CD4-positive, alpha-beta memory T cell (primary cell): ENCODE measurements at regions of chr6 and their contacts with region 1.

Region 1: GRCh38 chr6:132530293-132530974 is 7.6 kb upstream of the TAAR9 start:
- DNase-seq: peak; percentile 54 to 66 (median 59)
- H3K4me3 ChIP-seq: no peak overlapping the region
- H3K4me3 Mint-ChIP-seq: peak overlapping the region in 3 of 8 donors; percentile 18 to 57 (median 42)
- H3K27ac ChIP-seq: no peak overlapping the region
- H3K27ac Mint-ChIP-seq: no peak overlapping the region
- H3K4me1 ChIP-seq: no peaks in the 10 kb centered on the region
- H3K4me1 Mint-ChIP-seq: peaks cover 0 to 2% (median 0%) of the 10 kb centered on the region in 4 donors
- H3K27me3 ChIP-seq: peaks cover 6% of the 10 kb centered on the region
- H3K27me3 Mint-ChIP-seq: peaks cover 14 to 20% of the 10 kb centered on the region in 2 donors

Region 2: DNA sequence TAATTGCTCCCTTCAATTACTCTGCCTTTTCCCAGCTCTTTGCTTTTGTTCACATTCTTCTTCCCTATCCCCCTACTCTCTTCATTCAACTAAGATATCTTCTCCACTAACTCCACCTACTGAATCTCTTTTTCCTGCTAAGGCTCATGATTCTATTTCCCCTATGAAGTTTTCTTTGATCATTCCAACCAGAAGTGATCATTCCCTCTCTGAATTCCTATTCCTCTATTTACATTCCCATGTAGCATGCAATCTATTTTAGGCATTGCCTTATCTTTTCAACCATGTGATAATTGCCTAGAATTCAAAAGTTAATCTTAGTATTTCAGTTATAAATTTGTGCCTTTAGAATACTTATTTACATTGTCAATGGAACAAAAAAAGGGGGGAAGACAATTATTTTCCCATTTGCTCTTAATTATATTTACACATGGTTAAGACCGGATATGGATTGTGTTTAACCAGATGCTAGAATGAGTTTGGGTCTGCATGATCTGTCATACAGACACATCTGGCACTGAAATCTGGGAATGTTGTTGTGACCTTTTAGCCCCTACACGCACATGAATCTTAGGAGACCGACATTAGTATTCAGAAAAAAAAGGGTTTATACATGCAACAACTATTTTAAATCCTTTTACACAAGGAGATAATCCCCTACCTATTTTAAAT is 149.9 kb before region 1 on chr6:
- CTCF ChIA-PET with region 1: no interaction called
- POLR2A ChIA-PET with region 1: no interaction called
- intact Hi-C with region 1: no loop called
- DNase-seq: no peak
- H3K4me3 ChIP-seq: no peak overlapping the region
- H3K4me3 Mint-ChIP-seq: no peak overlapping the region
- H3K27ac ChIP-seq: no peak overlapping the region
- H3K27ac Mint-ChIP-seq: no peak overlapping the region
- H3K4me1 ChIP-seq: no peaks in the 10 kb centered on the region
- H3K4me1 Mint-ChIP-seq: no peaks in the 10 kb centered on the region
- H3K27me3 ChIP-seq: no peaks in the 10 kb centered on the region
- H3K27me3 Mint-ChIP-seq: peaks cover 14 to 16% of the 10 kb centered on the region in 2 donors

Region 3: GRCh38 chr6:132512638-132513632 is 17.5 kb before region 1 on chr6 and contains the start of gene STX7:
- CTCF ChIA-PET with region 1: interaction called, 19 read pairs
- POLR2A ChIA-PET with region 1: interaction called, 3 read pairs
- intact Hi-C with region 1: no loop called
- DNase-seq: peak; percentile 85 to 89 (median 87)
- H3K4me3 ChIP-seq: peak within 1 kb of the TSS; percentile 36 to 63
- H3K4me3 Mint-ChIP-seq: peak within 1 kb of the TSS; percentile 98 to 99 (median 98)
- H3K27ac ChIP-seq: peak within 1 kb of the TSS; percentile 54
- H3K27ac Mint-ChIP-seq: peak within 1 kb of the TSS; percentile 47 to 97 (median 92)
- H3K4me1 ChIP-seq: peaks cover 23% of the 10 kb centered on the region
- H3K4me1 Mint-ChIP-seq: peaks cover 23 to 40% (median 30%) of the 10 kb centered on the region in 4 donors
- H3K27me3 ChIP-seq: no peaks in the 10 kb centered on the region
- H3K27me3 Mint-ChIP-seq: no peaks in the 10 kb centered on the region
- total RNA-seq, gene STX7: 22.7 TPM

Region 4: DNA sequence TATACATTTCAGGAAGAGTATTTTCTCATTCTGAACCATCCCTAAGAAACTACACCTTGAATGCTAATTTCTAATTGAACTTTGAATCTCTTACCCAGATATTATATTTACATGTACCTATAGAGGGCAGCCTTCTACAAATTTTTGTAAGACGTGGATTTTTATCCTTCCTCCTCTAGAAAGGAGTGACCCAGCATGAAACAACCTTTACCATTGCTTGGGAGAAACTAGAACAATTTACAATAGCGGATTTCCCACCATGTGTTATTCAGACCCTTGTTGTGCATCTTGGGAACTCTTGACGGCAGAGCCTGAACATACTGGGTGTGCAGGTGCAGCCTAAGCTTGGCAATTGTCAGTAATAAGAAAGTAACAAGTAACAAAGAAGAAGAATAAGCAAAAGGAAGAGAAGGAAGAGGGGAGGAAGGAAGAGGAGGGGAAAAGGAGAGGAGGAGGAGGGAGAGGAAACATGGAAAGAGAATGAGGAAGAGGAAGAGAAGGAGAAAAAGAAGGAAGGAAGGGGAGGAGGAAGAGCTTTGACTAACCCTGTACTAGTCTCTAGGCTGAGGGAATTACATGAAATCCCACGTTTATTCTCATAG is 139.4 kb after region 1 on chr6:
- CTCF ChIA-PET with region 1: no interaction called
- POLR2A ChIA-PET with region 1: no interaction called
- intact Hi-C with region 1: loop called (anchors 1 kb)
- DNase-seq: peak in 4 of 5 donors; percentile 22 to 39 (median 36)
- H3K4me3 ChIP-seq: no peak overlapping the region
- H3K4me3 Mint-ChIP-seq: no peak overlapping the region
- H3K27ac ChIP-seq: no peak overlapping the region
- H3K27ac Mint-ChIP-seq: no peak overlapping the region
- H3K4me1 ChIP-seq: peaks cover 4% of the 10 kb centered on the region
- H3K4me1 Mint-ChIP-seq: peaks cover 0 to 4% (median 3%) of the 10 kb centered on the region in 4 donors
- H3K27me3 ChIP-seq: no peaks in the 10 kb centered on the region
- H3K27me3 Mint-ChIP-seq: peaks cover 2 to 6% of the 10 kb centered on the region in 2 donors

Region 5: DNA sequence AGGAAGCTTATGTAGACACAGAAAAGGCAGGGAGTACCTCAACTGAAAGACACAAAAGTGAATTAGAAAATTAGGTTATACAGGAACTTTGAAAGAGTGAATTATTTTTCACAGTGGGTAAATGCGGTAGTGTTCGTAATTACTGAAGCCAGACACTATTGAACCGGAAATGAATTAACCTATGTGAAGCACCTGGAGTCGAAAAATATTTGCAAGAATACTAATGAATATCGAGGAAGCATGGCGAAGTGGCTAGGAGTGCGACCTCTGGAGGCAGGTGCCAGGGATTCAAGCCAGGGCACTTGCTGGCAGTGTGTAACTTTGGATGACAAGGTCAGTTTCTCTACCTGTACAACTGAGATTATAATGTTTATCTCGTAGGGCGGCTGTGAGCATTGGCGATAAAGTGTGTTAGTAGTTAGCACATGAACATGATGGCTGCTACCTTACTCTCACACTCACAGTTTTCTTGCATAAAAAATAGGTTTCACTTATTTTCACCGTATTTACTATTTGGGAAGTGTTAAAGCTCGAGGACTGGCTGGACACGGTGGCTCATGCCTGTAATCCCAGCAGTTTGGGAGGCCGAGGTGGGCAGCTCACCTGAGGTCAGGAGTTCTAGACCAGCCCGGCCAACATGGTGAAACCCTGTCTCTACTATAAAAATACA is 268.6 kb after region 1 on chr6:
- CTCF ChIA-PET with region 1: interaction called, 5 read pairs
- POLR2A ChIA-PET with region 1: no interaction called
- intact Hi-C with region 1: loop called (anchors 1 kb)
- DNase-seq: peak; percentile 67 to 75 (median 67)
- H3K4me3 ChIP-seq: peak overlapping the region; percentile 63
- H3K4me3 Mint-ChIP-seq: no peak overlapping the region
- H3K27ac ChIP-seq: no peak overlapping the region
- H3K27ac Mint-ChIP-seq: no peak overlapping the region
- H3K4me1 ChIP-seq: peaks cover 12% of the 10 kb centered on the region
- H3K4me1 Mint-ChIP-seq: peaks cover 19 to 43% (median 30%) of the 10 kb centered on the region in 4 donors
- H3K27me3 ChIP-seq: no peaks in the 10 kb centered on the region
- H3K27me3 Mint-ChIP-seq: no peaks in the 10 kb centered on the region

Region 6: GRCh38 chr6:132962936-132963868 is 432.8 kb after region 1 on chr6:
- CTCF ChIA-PET with region 1: interaction called, 7 read pairs
- POLR2A ChIA-PET with region 1: no interaction called
- intact Hi-C with region 1: loop called (anchors 2 kb)
- DNase-seq: peak in 4 of 5 donors; percentile 17 to 32 (median 18)
- H3K4me3 ChIP-seq: no peak overlapping the region
- H3K4me3 Mint-ChIP-seq: no peak overlapping the region
- H3K27ac ChIP-seq: no peak overlapping the region
- H3K27ac Mint-ChIP-seq: no peak overlapping the region
- H3K4me1 ChIP-seq: no peaks in the 10 kb centered on the region
- H3K4me1 Mint-ChIP-seq: no peaks in the 10 kb centered on the region
- H3K27me3 ChIP-seq: no peaks in the 10 kb centered on the region
- H3K27me3 Mint-ChIP-seq: peaks cover 6 to 13% of the 10 kb centered on the region in 2 donors

Region 7: DNA sequence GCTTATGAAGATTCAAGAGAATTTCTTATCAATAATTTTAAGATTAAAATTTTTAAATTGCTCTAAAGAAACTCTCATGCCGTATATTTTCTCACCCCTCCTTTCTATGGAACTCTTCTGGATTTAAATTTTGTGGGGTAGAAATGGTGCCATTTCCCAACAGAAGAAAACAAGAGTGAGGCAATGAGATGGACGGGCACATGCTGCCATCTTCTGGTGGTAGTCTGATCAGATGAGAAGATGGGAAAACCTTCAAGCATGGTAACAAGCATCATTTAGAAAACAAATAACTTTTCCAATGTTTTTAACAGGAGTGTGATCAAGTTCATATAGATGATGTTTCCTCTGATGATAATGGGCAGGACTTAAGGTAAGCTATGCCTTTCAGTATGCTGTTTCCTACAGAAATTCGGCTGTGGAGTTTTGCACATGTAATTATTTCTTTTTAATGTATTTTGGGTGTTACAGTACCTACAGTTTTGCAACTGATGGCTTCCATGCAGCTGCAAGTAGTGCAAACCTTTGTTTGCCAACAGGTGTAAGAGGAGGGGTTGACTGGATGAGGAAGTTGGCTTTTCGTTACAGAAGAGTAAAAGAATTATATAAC is 982.1 kb after region 1 on chr6:
- CTCF ChIA-PET with region 1: no interaction called
- POLR2A ChIA-PET with region 1: no interaction called
- intact Hi-C with region 1: loop called (anchors 1 kb)
- DNase-seq: peak in 2 of 5 donors; percentile 4 to 15
- H3K4me3 ChIP-seq: no peak overlapping the region
- H3K4me3 Mint-ChIP-seq: no peak overlapping the region
- H3K27ac ChIP-seq: no peak overlapping the region
- H3K27ac Mint-ChIP-seq: no peak overlapping the region
- H3K4me1 ChIP-seq: no peaks in the 10 kb centered on the region
- H3K4me1 Mint-ChIP-seq: no peaks in the 10 kb centered on the region
- H3K27me3 ChIP-seq: no peaks in the 10 kb centered on the region
- H3K27me3 Mint-ChIP-seq: peaks cover 1 to 7% of the 10 kb centered on the region in 2 donors

Region 8: GRCh38 chr6:134097114-134097707 is 1566.8 kb after region 1 on chr6:
- CTCF ChIA-PET with region 1: interaction called, 3 read pairs
- POLR2A ChIA-PET with region 1: no interaction called
- intact Hi-C with region 1: loop called (anchors 1 kb)
- DNase-seq: peak; percentile 56 to 60 (median 57)
- H3K4me3 ChIP-seq: no peak overlapping the region
- H3K4me3 Mint-ChIP-seq: no peak overlapping the region
- H3K27ac ChIP-seq: no peak overlapping the region
- H3K27ac Mint-ChIP-seq: no peak overlapping the region
- H3K4me1 ChIP-seq: no peaks in the 10 kb centered on the region
- H3K4me1 Mint-ChIP-seq: no peaks in the 10 kb centered on the region
- H3K27me3 ChIP-seq: no peaks in the 10 kb centered on the region
- H3K27me3 Mint-ChIP-seq: peaks cover 17 to 18% of the 10 kb centered on the region in 2 donors